ENCODE measurements at regions of chr2 and their contacts with region 1.

Region 1: GRCh38 chr2:161580426-161580825 is 43.8 kb upstream of the SLC4A10 start:
- DNase-seq: no peak
- H3K4me3 ChIP-seq: no peak overlapping the region
- CTCF ChIP-seq: no peak
- POLR2A ChIP-seq: no peak

Region 2: DNA sequence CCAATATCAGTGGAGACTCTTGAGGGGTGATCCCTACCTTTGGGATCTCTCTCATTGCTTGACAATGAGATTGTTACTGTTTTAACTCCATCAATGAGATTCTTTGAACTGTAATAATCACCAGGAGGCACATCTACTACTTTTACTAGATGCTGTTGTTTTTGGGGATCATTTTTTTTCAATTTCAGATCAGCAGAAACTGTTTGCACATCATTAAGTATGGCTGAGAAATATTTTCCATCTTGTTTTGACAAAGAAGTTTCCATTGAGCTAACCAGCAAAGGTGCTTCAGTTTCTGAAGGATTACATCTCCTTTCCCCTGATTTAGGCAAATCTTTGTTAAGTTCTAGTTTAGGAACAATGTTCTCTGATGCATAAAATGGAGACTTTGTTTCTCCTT is 11.0 kb before region 1 on chr2:
- intact Hi-C with region 1: no loop called
- DNase-seq: no peak
- H3K4me3 ChIP-seq: no peak overlapping the region
- CTCF ChIP-seq: no peak
- POLR2A ChIP-seq: no peak

Region 3: GRCh38 chr2:162143969-162144368 is 563.5 kb after region 1 on chr2:
- intact Hi-C with region 1: loop called (anchors 5 kb)
- DNase-seq: no peak
- H3K4me3 ChIP-seq: no peak overlapping the region
- CTCF ChIP-seq: no peak
- POLR2A ChIP-seq: no peak